CD4-positive, alpha-beta T cell (primary cell): ENCODE measurements at regions of chr6 and their contacts with region 1.

Region 1: DNA sequence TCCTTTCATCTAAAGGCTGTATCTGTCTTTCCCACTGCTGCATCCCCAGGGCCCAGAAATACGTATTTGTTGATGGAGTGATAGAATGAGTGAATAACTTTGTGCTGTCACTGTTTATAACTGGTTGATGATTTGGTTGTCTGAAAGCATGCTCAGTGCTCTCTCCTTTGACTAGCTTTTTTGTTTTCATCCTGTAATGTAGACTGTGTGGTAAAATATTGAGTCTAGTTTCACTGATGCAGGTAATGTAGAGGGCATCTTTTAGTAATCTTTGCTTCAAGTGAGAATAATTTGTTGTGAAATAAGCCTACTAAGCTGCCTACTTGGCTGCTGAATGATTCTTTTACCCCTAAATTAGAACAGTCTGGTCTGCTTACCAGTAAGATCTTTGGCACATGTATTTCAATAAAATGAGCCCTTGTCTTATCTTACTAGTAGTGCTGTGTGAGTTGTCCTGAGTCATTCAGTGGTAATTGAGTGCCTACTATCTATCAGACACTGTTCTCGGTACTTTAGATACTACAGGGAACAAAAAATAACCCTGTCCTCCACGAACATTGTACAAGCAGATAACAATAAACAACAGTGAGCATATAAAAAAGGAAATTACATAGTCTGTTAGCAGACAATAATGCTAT is 39.9 kb downstream of the MAPK14 start:
- DNase-seq: no peak
- ATAC-seq: no peak
- H3K4me3 ChIP-seq: no peak overlapping the region
- H3K4me3 Mint-ChIP-seq: no peak overlapping the region
- H3K27ac ChIP-seq: no peak overlapping the region
- H3K27ac Mint-ChIP-seq: peak overlapping the region; percentile 63
- H3K4me1 ChIP-seq: peaks cover 6% of the 10 kb centered on the region
- H3K4me1 Mint-ChIP-seq: peaks cover 73% of the 10 kb centered on the region
- H3K27me3 ChIP-seq: no peaks in the 10 kb centered on the region
- H3K27me3 Mint-ChIP-seq: no peaks in the 10 kb centered on the region
- CTCF ChIP-seq: no peak

Region 2: GRCh38 chr6:36033935-36034334 is 33.6 kb before region 1 on chr6:
- CTCF ChIA-PET with region 1: interaction called, 3 read pairs
- POLR2A ChIA-PET with region 1: interaction called, 7 read pairs
- intact Hi-C with region 1: loop called in 1 of 2 experiments (anchors 5 kb)
- DNase-seq: peak in 8 of 14 experiments; percentile 7 to 45 (median 13)
- ATAC-seq: peak; percentile 65
- H3K4me3 ChIP-seq: no peak overlapping the region
- H3K4me3 Mint-ChIP-seq: peak overlapping the region; percentile 60
- H3K27ac ChIP-seq: no peak overlapping the region
- H3K27ac Mint-ChIP-seq: peak overlapping the region; percentile 37
- H3K4me1 ChIP-seq: peaks cover 54% of the 10 kb centered on the region
- H3K4me1 Mint-ChIP-seq: peaks cover 83% of the 10 kb centered on the region
- H3K27me3 ChIP-seq: no peaks in the 10 kb centered on the region
- H3K27me3 Mint-ChIP-seq: no peaks in the 10 kb centered on the region
- CTCF ChIP-seq: no peak